PC-9 (cell line): ENCODE measurements at regions of chr2 and their contacts with region 1.

Region 1: GRCh38 chr2:165239230-165239629 is at the start of gene SCN2A:
- DNase-seq: peak in 1 of 2 experiments; percentile 5
- H3K4me3 ChIP-seq: no peak within 1 kb of the TSS
- H3K27ac ChIP-seq: no peak within 1 kb of the TSS
- H3K4me1 ChIP-seq: no peaks in the 10 kb centered on the region
- H3K27me3 ChIP-seq: no peaks in the 10 kb centered on the region
- CTCF ChIP-seq: peak; percentile 63
- total RNA-seq, gene SCN2A: 0.15 TPM in 1 of 2 replicates, not detected in the other

Region 2: GRCh38 chr2:163515836-163516235 is 1723.4 kb before region 1 on chr2:
- CTCF ChIA-PET with region 1: no interaction called
- POLR2A ChIA-PET with region 1: no interaction called
- intact Hi-C with region 1: no loop called
- DNase-seq: no peak
- H3K4me3 ChIP-seq: no peak overlapping the region
- H3K27ac ChIP-seq: no peak overlapping the region
- H3K4me1 ChIP-seq: no peaks in the 10 kb centered on the region
- H3K27me3 ChIP-seq: no peaks in the 10 kb centered on the region
- CTCF ChIP-seq: no peak

Region 3: GRCh38 chr2:163970058-163970813 is 1269.0 kb before region 1 on chr2:
- CTCF ChIA-PET with region 1: no interaction called
- POLR2A ChIA-PET with region 1: no interaction called
- intact Hi-C with region 1: no loop called
- DNase-seq: no peak
- H3K4me3 ChIP-seq: no peak overlapping the region
- H3K27ac ChIP-seq: no peak overlapping the region
- H3K4me1 ChIP-seq: no peaks in the 10 kb centered on the region
- H3K27me3 ChIP-seq: no peaks in the 10 kb centered on the region
- CTCF ChIP-seq: no peak

Region 4: GRCh38 chr2:165163761-165164160 is 75.5 kb before region 1 on chr2:
- CTCF ChIA-PET with region 1: no interaction called
- POLR2A ChIA-PET with region 1: no interaction called
- intact Hi-C with region 1: no loop called
- DNase-seq: no peak
- H3K4me3 ChIP-seq: no peak overlapping the region
- H3K27ac ChIP-seq: no peak overlapping the region
- H3K4me1 ChIP-seq: no peaks in the 10 kb centered on the region
- H3K27me3 ChIP-seq: no peaks in the 10 kb centered on the region
- CTCF ChIP-seq: no peak

Region 5: DNA sequence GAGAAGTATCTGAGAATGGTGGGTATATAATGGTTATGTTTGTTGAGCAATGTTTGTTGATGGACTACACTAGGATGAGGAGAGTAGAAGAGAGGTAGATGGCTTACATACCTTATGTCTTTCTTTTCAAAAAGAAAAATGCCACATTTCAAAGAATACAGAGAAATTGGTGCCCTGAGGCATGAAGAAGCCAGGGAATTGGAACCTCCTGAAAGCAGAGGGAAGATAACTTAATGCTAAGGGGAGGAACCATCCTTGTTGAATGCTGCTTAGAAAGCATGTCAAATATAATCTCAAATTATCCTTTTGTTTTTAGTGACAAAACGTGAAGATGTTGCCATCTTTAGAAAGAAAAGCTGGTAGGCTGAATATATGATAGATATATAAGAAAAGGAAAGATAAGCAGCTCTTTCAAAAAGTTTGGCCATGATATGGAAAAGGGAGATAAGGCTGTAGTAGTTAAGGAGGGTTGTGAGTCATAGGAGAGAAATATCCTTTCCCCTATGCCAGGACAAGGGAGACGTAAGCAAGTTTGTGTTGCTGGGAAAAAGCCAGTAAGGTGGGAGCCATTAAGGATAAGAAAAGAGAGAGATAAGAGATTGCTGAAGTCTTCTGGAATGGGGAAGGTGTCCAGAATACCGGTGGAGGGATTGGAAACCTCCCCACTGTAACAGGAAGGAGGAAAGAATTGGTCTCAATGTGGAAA is 66.3 kb after region 1 on chr2:
- CTCF ChIA-PET with region 1: no interaction called
- POLR2A ChIA-PET with region 1: no interaction called
- intact Hi-C with region 1: loop called (anchors 10 kb)
- DNase-seq: no peak
- H3K4me3 ChIP-seq: no peak overlapping the region
- H3K27ac ChIP-seq: no peak overlapping the region
- H3K4me1 ChIP-seq: no peaks in the 10 kb centered on the region
- H3K27me3 ChIP-seq: no peaks in the 10 kb centered on the region
- CTCF ChIP-seq: no peak

Region 6: DNA sequence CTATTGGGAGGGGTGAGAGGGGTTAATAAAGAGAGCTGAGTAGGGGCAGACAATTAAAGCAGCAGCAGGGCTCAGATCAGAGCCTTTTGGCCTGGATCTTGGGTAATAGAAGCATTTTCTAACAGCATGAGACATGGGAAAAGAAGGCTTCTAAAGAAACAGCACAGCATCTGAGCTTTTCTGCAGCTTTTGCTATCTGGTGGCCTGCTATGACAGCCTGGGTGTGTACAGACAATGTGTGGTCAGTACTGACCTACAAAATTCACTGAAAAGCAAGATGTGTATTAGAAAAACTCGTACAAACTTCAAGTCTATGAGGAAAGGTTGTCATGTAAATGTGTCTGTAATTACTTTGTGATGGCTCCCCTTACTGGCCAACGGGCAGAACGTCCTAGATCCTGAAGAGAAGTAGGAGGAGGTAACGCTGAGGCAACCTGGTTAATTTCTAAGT is 459.2 kb after region 1 on chr2:
- CTCF ChIA-PET with region 1: no interaction called
- POLR2A ChIA-PET with region 1: no interaction called
- intact Hi-C with region 1: loop called (anchors 2 kb)
- DNase-seq: peak in 1 of 2 experiments; percentile 14
- H3K4me3 ChIP-seq: no peak overlapping the region
- H3K27ac ChIP-seq: no peak overlapping the region
- H3K4me1 ChIP-seq: no peaks in the 10 kb centered on the region
- H3K27me3 ChIP-seq: no peaks in the 10 kb centered on the region
- CTCF ChIP-seq: peak; percentile 44